ENCODE measurements at regions of chr10 and their contacts with region 1.

Region 1: GRCh38 chr10:19819419-19820033 is 3.3 kb downstream of the PLXDC2 start:
- DNase-seq: no peak
- ATAC-seq: peak; percentile 42
- H3K4me3 ChIP-seq: no peak overlapping the region
- H3K27ac ChIP-seq: no peak overlapping the region
- H3K4me1 ChIP-seq: peaks cover 0 to 2% of the 10 kb centered on the region in 2 donors
- H3K27me3 ChIP-seq: no peaks in the 10 kb centered on the region

Region 2: GRCh38 chr10:19638182-19638895 is 181.2 kb before region 1 on chr10:
- intact Hi-C with region 1: loop called (anchors 10 kb)
- DNase-seq: no peak
- ATAC-seq: peak; percentile 74
- H3K4me3 ChIP-seq: peak overlapping the region; percentile 11 to 14
- H3K27ac ChIP-seq: peak overlapping the region; percentile 67 to 71
- H3K4me1 ChIP-seq: peaks cover under 1 to 2% of the 10 kb centered on the region in 2 donors
- H3K27me3 ChIP-seq: no peaks in the 10 kb centered on the region

Region 3: GRCh38 chr10:20254078-20254477 is 434.6 kb after region 1 on chr10:
- intact Hi-C with region 1: loop called in 1 of 2 experiments (anchors 5 kb)
- DNase-seq: no peak
- ATAC-seq: peak; percentile 50
- H3K4me3 ChIP-seq: no peak overlapping the region
- H3K27ac ChIP-seq: peak overlapping the region in 1 of 2 donors; percentile 57
- H3K4me1 ChIP-seq: peaks cover 0 to 1% of the 10 kb centered on the region in 2 donors
- H3K27me3 ChIP-seq: no peaks in the 10 kb centered on the region

Region 4: GRCh38 chr10:20768843-20769242 is 949.3 kb after region 1 on chr10:
- intact Hi-C with region 1: loop called (anchors 1 to 5 kb)
- DNase-seq: no peak
- ATAC-seq: no peak
- H3K4me3 ChIP-seq: no peak overlapping the region
- H3K27ac ChIP-seq: no peak overlapping the region
- H3K4me1 ChIP-seq: no peaks in the 10 kb centered on the region
- H3K27me3 ChIP-seq: no peaks in the 10 kb centered on the region

Measured in aorta (tissue), 5 donors.